Cardiac septum (tissue), 1 donor: ENCODE measurements at regions of chr4 and their contacts with region 1.

Region 1: GRCh38 chr4:121950212-121950679 is 1.6 kb downstream of the TRPC3 start:
- DNase-seq: peak; percentile 82

Region 2: GRCh38 chr4:122224348-122224747 is 274.1 kb after region 1 on chr4:
- intact Hi-C with region 1: loop called (anchors 5 kb)
- DNase-seq: no peak